ENCODE measurements at regions of chr5 and their contacts with region 1.

Region 1: GRCh38 chr5:91110686-91111085 is 272.4 kb downstream of the ARRDC3 start:
- DNase-seq: no peak
- H3K4me3 ChIP-seq: no peak overlapping the region
- H3K27ac ChIP-seq: peak overlapping the region; percentile 70
- H3K4me1 ChIP-seq: peaks cover 37% of the 10 kb centered on the region
- H3K27me3 ChIP-seq: no peaks in the 10 kb centered on the region
- CTCF ChIP-seq: no peak

Region 2: GRCh38 chr5:91027405-91028139 is 83.1 kb before region 1 on chr5:
- intact Hi-C with region 1: no loop called
- DNase-seq: no peak
- H3K4me3 ChIP-seq: no peak overlapping the region
- H3K27ac ChIP-seq: no peak overlapping the region
- H3K4me1 ChIP-seq: no peaks in the 10 kb centered on the region
- H3K27me3 ChIP-seq: no peaks in the 10 kb centered on the region
- CTCF ChIP-seq: no peak

Region 3: DNA sequence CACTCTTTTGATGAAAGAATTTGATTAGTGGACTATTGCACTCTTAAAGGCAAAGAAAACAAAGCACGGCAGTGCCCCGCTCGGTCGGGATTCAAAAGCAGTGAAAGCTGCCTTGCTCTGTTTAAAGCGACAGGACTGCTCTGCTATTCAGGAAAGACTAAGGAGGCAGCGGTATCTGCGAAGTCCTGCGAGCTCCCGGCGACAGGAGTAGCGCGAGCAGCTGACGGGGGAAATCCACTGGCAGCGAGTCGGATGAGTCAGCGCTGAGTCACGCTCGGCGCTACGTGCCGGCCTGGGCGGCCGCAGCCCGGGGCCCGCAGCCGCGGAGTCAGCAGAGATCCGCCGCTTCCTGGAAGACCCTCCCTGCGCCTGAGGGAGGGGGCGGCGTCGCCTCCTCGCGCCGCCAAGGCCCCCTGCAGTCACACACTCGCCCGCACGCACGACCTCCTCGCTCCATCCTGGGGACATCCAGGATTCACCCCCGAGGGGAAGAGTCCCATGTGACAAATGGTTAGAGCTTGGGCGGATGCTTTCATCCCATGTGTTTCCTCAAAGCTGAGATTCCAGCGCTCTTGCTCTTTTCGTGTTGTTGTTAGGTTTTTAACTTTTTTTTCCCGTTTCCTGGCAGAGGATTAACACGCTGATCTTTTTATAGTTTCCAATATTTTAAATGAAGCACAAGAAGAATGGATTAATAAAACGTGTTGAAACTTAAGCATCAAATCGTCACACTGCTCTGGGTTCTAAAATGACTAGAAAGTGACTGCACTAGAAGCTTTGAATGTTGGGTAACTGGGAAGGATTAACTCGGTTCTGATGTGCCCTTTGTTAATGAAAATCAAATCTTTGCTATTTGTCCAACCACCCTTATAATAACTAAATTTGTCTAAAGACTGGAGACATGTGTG is 169.9 kb after region 1 on chr5:
- intact Hi-C with region 1: loop called (anchors 10 kb)
- DNase-seq: peak; percentile 94
- H3K4me3 ChIP-seq: peak overlapping the region; percentile 68
- H3K27ac ChIP-seq: peak overlapping the region; percentile 94
- H3K4me1 ChIP-seq: peaks cover 19% of the 10 kb centered on the region
- H3K27me3 ChIP-seq: no peaks in the 10 kb centered on the region
- CTCF ChIP-seq: peak; percentile 11

Region 4: GRCh38 chr5:91456928-91457680 is 346.4 kb after region 1 on chr5:
- intact Hi-C with region 1: no loop called
- DNase-seq: no peak
- H3K4me3 ChIP-seq: no peak overlapping the region
- H3K27ac ChIP-seq: no peak overlapping the region
- H3K4me1 ChIP-seq: no peaks in the 10 kb centered on the region
- H3K27me3 ChIP-seq: no peaks in the 10 kb centered on the region
- CTCF ChIP-seq: no peak

Measured in left ventricle myocardium inferior (tissue), 1 donor.